Uterus (tissue), 4 donors: ENCODE measurements at regions of chr16 and their contacts with region 1.

Region 1: GRCh38 chr16:66406534-66407221 is 20.4 kb upstream of the BEAN1 start:
- DNase-seq: peak; percentile 82 to 84
- H3K4me3 ChIP-seq: peak overlapping the region; percentile 29 to 31
- H3K27ac ChIP-seq: peak overlapping the region in 1 of 2 donors; percentile 38
- H3K4me1 ChIP-seq: peaks cover 0 to 5% of the 10 kb centered on the region in 2 donors
- H3K27me3 ChIP-seq: no peaks in the 10 kb centered on the region
- CTCF ChIP-seq: peak; percentile 85 to 91 (median 88)
- POLR2A ChIP-seq: no peak

Region 2: GRCh38 chr16:66116163-66117002 is 290.3 kb before region 1 on chr16:
- intact Hi-C with region 1: no loop called
- DNase-seq: no peak
- H3K4me3 ChIP-seq: no peak overlapping the region
- H3K27ac ChIP-seq: no peak overlapping the region
- H3K4me1 ChIP-seq: no peaks in the 10 kb centered on the region
- H3K27me3 ChIP-seq: no peaks in the 10 kb centered on the region
- CTCF ChIP-seq: no peak
- POLR2A ChIP-seq: no peak

Region 3: DNA sequence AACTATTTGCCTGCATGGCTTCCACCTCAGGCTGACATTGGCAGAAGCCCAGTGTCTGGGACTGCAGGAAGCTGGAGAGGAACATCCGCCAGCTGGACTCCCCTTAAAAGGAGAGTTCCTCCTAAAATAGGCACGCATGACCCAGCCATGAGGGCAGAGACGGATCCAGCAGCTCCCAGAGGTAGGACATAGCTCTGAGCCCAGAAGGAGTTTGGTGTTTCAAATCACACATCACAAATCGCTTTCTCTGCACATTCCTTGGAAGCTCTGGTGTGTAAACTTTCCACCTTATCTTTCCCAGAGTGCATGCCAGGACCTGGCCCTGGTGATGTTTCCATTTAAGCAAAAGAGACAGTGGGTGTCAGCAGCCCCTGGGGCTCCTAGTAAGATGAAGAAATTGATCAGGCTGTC is 271.3 kb before region 1 on chr16:
- intact Hi-C with region 1: no loop called
- DNase-seq: peak; percentile 27 to 33
- H3K4me3 ChIP-seq: no peak overlapping the region
- H3K27ac ChIP-seq: no peak overlapping the region
- H3K4me1 ChIP-seq: no peaks in the 10 kb centered on the region
- H3K27me3 ChIP-seq: no peaks in the 10 kb centered on the region
- CTCF ChIP-seq: no peak
- POLR2A ChIP-seq: no peak

Region 4: DNA sequence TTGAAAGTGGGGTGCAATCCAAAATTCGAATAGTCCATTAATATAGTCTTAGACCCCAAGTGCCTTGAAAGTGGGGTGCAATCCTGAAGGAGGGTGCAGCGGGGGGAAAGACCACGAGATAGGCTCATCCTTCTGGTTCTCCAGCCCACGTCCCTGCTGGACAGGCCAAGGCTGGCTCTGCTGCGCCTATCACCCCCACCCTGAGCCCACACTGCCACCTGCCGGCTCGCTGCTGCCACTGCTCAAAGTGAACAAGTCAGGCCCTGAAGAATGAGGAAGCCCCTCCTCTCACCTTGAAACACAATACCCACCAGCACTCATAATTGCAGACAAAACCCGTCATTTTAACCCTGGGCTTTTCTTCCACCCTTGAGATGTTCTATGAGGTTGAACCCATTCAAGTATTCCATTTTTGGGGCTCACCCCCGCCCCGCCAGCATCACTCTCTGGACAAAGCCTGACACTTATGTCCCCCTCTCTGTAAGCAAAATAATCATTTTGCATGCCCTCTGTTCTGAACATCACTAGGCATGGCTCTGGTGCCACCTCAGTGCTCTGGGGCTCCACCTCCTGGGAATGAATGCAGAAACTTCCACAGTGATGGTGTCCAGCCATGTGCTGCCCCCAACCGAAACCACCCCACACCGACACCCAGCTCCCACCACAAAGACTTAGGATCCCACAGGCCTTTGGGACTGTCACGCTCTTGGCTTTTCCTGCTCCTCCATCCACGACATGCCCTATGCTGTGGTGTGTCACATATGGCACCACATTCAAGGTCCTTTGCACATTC is 77.2 kb after region 1 on chr16:
- intact Hi-C with region 1: loop called (anchors 5 kb)
- DNase-seq: peak; percentile 66 to 70
- H3K4me3 ChIP-seq: no peak overlapping the region
- H3K27ac ChIP-seq: no peak overlapping the region
- H3K4me1 ChIP-seq: peaks cover 0 to 9% of the 10 kb centered on the region in 2 donors
- H3K27me3 ChIP-seq: no peaks in the 10 kb centered on the region
- CTCF ChIP-seq: peak; percentile 89 to 93 (median 90)
- POLR2A ChIP-seq: no peak

Region 5: GRCh38 chr16:66608241-66609138 is 201.8 kb after region 1 on chr16:
- intact Hi-C with region 1: loop called (anchors 10 kb)
- DNase-seq: peak; percentile 86 to 87
- H3K4me3 ChIP-seq: no peak overlapping the region
- H3K27ac ChIP-seq: peak overlapping the region; percentile 53 to 71
- H3K4me1 ChIP-seq: no peaks in the 10 kb centered on the region
- H3K27me3 ChIP-seq: no peaks in the 10 kb centered on the region
- CTCF ChIP-seq: peak; percentile 82 to 91 (median 84)
- POLR2A ChIP-seq: no peak